Motor neuron (in vitro differentiated cells): ENCODE measurements at regions of chr6 and their contacts with region 1.

Region 1: DNA sequence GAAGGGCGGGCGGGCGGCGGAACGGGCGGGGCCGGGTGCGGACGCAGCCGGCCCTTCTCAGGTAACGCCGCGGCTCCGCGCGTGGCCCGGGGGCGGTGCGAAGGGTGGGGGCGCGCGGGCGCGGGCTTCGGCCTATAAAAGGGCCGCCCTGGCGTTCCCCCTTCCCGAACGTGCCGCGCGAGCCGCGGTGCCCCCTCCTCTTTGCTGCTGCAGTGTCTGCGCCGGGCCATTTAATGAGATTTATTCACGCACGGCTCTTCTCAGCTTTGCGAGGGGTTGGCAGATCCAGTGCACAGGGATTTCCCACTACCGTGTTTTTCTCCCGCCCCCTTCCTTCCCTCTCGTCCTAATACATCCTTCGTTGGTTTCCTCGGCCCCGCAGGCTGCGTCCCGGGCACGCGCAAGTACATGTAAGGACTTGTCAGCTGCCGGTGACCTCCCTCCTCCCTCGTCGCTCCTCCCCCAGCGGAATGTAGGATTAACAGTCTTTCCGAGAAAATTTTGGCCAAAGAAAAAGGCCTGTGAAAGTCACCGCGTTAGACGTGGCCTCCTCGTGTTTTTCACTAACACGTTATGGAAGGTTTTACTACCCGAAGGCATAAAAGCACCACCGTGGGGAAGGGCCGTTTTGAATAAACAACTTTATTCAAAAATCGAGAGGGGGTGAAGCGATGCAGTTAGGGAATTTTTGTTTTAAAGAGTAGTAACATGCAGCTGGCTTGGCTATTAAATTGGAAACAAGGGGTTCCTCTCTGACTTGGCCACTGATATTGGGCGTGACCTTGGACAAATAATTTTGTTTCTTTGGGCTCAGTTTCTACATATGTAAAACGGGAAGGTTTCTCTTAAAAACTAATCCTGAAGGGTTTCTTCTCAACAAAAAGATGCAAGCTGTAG is 966 bp upstream of the REV3L start:
- ATAC-seq: peak; percentile 57 to 78 (median 73)
- H3K4me3 ChIP-seq: peak overlapping the region; percentile 72 to 96 (median 93)
- H3K27ac ChIP-seq: peak overlapping the region; percentile 96 to 98
- H3K4me1 ChIP-seq: peaks cover 0 to 26% of the 10 kb centered on the region in 2 donors

Region 2: GRCh38 chr6:110201151-110201884 is 1282.7 kb before region 1 on chr6:
- in situ Hi-C with region 1: no loop called
- ATAC-seq: peak in 3 of 8 experiments; percentile 44 to 69 (median 61)
- H3K4me3 ChIP-seq: no peak overlapping the region
- H3K27ac ChIP-seq: no peak overlapping the region
- H3K4me1 ChIP-seq: peaks cover 0 to 21% of the 10 kb centered on the region in 2 donors

Region 3: DNA sequence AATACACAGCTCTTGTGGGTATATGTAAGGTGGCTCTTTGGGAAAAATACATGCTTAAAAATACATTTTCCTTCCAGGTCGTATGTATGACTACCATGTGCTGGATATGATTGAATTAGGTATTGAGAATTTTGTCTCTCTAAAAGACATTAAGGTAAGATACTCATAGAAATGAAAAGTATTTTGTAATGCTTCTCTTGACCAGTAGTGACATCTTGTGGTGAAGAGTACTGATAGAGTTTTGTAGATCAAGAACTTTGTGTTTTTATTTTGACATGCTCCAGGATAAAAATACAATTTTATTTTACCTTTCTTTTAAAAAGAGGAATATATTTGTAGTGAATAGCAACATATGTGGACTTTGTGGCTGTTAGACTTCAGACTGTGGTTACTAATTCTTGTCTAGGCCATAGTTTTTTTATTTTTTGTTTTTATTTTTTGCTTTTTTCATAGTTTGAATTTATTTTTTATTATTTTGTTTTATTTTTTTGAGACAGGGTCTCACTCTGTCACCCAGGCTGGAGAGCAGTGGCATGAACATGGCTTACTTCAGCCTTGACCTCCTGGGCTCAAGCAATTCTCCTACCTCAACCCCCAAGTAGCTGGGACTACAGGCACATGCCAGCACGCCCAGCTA is 484.2 kb before region 1 on chr6:
- in situ Hi-C with region 1: no loop called
- ATAC-seq: peak in 1 of 8 experiments; percentile 33
- H3K4me3 ChIP-seq: no peak overlapping the region
- H3K27ac ChIP-seq: no peak overlapping the region
- H3K4me1 ChIP-seq: no peaks in the 10 kb centered on the region

Region 4: DNA sequence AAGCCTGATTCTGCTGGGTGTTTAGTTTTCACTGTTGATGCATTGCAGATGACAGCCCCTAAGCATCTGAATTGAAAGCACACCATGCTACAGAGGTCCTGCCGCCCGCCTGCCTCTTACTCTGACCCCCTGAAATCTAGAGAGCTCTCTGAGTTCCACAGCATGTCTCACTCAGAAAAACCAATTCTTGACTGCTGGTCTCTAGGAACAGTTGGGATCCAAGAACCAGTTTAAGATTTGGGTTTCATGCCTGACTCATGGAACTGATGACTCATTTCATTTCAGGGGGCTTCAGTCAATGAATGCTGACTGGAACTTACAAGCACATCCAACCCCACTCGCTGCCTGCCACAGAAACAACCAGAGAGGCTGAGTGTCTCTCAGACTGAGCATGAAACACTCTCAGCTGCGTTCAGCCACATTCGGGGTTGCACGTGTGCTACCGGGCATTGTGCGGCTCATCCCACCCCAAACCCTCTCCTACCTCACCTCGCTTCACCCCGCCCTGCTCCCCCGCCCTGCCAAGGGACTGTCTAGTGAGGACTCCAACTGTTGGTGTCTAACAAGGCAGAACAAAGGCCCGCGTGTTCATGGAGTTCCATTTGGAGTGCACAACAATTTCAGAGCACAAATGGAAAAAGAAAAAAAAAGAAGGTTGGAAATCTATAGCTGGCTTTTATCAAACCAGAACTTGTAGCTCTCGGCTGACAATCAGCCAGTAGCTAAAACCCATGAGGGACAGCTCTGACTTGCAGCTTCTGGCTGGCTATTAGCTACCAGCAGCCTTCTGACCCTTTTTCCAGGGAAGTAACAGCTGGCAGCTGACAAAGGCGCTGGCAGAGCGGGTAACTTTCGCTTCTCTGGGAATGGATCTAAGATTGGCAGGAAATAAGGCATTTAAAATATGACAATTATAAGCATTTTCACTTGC is 141.7 kb after region 1 on chr6:
- in situ Hi-C with region 1: no loop called
- ATAC-seq: peak in 7 of 8 experiments; percentile 59 to 83 (median 78)
- H3K4me3 ChIP-seq: no peak overlapping the region
- H3K27ac ChIP-seq: peak overlapping the region in 1 of 2 donors; percentile 44
- H3K4me1 ChIP-seq: peaks cover 19% of the 10 kb centered on the region in 2 donors

Region 5: DNA sequence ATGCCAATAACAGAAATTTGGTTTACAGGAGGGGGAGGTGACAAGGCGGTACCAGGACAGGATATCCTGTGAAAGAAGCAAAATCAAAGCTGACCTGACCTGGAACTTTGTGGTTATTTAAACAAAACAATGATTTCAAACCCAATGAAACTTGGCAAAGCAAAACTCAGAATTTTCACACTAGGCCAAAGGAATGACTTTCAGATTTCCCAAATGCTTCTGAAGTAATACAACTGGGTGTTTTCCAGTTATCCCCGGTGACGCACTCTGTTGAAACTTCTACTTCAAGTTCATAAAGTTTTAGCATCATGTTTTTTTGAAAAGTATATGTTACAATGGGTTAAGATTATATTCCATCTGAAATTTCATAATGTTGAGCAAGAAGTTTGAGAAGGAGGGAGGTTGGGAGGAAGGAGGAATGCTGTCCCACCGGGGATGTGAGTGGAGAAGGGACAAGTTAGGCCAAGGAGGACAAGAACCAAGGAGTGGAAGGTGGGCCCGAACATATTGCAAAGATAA is 199.8 kb after region 1 on chr6:
- in situ Hi-C with region 1: loop called in 1 of 9 experiments (anchors 25 kb)
- ATAC-seq: peak in 2 of 8 experiments; percentile 56 to 73
- H3K4me3 ChIP-seq: no peak overlapping the region
- H3K27ac ChIP-seq: no peak overlapping the region
- H3K4me1 ChIP-seq: peaks cover 35% of the 10 kb centered on the region in 2 donors